Left cardiac atrium (tissue), 4 donors: ENCODE measurements at regions of chr17 and their contacts with region 1.

Region 1: DNA sequence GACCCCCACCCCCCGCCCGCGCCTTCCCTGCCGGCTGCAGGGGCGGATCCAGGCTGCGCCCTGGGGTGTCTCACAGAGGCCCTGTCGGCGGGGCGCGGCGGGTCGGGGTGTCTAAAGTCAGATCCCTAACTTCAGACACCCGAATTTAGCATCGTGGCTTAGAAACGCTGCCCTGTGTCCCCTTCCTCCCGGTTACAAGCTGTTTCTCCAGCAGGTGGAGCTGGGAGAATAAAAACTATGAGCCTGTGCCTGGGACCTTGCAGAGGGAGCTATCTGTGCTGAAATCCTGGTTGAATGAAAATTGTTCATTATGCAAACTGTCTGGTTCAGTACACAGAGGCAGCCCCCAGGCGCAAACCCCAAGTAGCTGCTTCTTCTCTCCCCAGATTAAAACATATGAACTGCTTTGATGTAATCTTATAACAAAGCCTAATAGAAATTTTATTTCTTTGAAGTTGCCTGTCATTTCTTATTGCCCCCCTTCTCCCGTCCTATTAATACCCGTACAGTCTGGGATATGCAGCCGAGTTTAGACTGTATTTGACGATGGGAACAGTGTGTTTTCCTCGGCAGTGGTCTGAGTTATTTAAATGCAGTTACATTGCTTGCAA is 79.0 kb downstream of the RPA1 start:
- DNase-seq: peak; percentile 62
- ATAC-seq: peak; percentile 89 to 91

Region 2: GRCh38 chr17:1999557-2000251 is 90.9 kb after region 1 on chr17:
- intact Hi-C with region 1: no loop called
- DNase-seq: peak; percentile 44
- ATAC-seq: peak; percentile 75 to 79

Region 3: DNA sequence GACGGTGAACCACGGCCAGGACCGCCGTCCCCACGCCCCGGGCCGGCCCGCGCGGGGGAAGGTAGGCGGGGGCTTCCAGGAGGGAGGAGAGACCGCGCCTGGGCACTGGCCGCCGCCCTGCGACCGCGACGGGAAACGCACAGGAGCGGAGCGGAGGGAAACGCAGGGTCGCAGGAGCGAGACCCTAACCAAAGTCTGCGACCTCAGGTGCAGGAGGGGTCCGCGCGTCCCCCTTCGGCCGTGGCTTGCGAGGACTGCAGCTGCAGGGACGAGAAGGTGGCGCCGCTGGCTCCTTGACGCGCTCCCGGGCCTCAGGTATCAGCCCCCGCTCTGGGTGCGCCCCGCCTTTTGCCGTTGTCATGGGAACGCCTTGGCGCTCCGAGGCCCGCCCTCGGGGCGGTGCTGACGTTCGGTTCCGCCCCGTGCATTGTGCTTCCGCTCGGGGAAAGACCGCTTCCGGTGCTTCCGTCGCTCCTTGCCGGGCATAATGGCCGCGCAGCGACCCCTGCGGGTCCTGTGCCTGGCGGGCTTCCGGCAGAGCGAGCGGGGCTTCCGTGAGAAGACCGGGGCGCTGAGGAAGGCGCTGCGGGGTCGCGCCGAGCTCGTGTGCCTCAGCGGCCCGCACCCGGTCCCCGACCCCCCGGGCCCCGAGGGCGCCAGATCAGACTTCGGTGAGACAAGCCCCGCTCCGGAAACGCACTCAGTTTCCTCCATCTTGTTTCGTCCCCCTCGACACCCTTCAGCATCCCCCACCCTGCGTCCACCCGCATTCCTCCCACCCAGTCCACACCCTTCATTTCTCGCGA is 133.0 kb after region 1 on chr17 and contains the start of gene OVCA2:
- intact Hi-C with region 1: loop called in 1 of 2 experiments (anchors 5 kb)
- DNase-seq: peak; percentile 97
- ATAC-seq: peak; percentile 94 to 97
- total RNA-seq, gene OVCA2: 15.4 to 26.5 TPM